ENCODE measurements at regions of chrX and their contacts with region 1.

Region 1: DNA sequence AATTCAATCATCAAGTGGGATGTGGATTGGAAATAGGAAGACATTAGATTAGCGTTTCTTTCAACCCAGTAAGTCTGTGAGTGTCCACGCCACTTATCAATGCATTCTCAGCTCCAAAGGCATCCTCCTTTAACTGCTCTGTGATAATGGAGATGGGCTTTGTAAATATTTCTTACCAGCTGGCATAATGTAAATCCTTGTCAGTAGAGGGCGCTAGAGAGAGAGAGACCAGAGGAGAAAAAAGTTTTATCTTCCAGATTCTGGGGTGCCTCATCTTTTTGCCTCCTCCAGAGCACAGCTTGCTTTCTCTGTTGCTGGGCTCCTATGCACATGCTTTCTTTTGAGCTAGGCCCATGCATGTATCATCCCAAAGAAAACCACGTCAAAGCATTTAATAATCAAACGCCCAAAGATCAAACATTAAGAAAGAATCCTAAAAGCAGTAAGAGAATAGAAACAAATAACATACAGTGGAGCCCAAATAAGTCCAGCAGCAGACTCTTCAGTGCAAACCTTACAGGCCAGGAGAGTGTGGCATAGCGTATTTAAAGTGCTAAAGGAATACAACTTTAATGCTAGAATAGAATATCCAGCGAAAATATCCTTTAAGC is 9.6 kb upstream of the MTMR1 start:
- DNase-seq: no peak
- ATAC-seq: peak; percentile 59
- H3K4me3 Mint-ChIP-seq: no peak overlapping the region
- H3K27ac Mint-ChIP-seq: no peak overlapping the region
- H3K4me1 Mint-ChIP-seq: peaks cover 11% of the 10 kb centered on the region
- H3K27me3 Mint-ChIP-seq: no peaks in the 10 kb centered on the region
- CTCF ChIP-seq: 0 out of 2 replicates have a peak, but pooled peaks have one; percentile 15

Region 2: GRCh38 chrX:150693775-150694574 is 10.3 kb after region 1 on chrX:
- CTCF ChIA-PET with region 1: interaction called, 13 read pairs
- POLR2A ChIA-PET with region 1: no interaction called
- DNase-seq: peak; percentile 67
- ATAC-seq: peak; percentile 45
- H3K4me3 Mint-ChIP-seq: peak overlapping the region; percentile 68
- H3K27ac Mint-ChIP-seq: no peak overlapping the region
- H3K4me1 Mint-ChIP-seq: peaks cover 18% of the 10 kb centered on the region
- H3K27me3 Mint-ChIP-seq: no peaks in the 10 kb centered on the region
- CTCF ChIP-seq: no peak

Region 3: DNA sequence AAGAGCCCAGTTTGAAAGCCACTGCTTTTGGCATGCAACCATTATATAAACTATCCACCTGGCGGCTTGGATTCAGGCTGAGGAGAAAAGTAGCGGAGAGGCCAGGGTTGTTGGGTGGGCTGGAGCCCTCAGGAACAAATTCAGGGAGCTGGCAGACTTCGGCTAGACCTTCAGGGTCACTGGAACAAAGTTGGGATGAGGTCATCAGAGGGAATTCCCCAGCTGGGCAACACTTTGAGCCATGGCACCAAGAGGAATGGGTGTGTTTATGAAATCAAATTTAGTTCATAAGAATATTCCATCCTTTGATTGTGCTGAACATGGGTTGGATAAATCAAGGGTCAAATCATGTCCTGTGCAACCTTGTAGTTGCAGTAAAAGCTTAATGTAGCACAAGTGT is 31.5 kb after region 1 on chrX:
- CTCF ChIA-PET with region 1: interaction called, 14 read pairs
- POLR2A ChIA-PET with region 1: no interaction called
- DNase-seq: no peak
- ATAC-seq: no peak
- H3K4me3 Mint-ChIP-seq: no peak overlapping the region
- H3K27ac Mint-ChIP-seq: no peak overlapping the region
- H3K4me1 Mint-ChIP-seq: peaks cover 16% of the 10 kb centered on the region
- H3K27me3 Mint-ChIP-seq: no peaks in the 10 kb centered on the region
- CTCF ChIP-seq: no peak